ENCODE measurements at regions of chr19 and their contacts with region 1.

Region 1: DNA sequence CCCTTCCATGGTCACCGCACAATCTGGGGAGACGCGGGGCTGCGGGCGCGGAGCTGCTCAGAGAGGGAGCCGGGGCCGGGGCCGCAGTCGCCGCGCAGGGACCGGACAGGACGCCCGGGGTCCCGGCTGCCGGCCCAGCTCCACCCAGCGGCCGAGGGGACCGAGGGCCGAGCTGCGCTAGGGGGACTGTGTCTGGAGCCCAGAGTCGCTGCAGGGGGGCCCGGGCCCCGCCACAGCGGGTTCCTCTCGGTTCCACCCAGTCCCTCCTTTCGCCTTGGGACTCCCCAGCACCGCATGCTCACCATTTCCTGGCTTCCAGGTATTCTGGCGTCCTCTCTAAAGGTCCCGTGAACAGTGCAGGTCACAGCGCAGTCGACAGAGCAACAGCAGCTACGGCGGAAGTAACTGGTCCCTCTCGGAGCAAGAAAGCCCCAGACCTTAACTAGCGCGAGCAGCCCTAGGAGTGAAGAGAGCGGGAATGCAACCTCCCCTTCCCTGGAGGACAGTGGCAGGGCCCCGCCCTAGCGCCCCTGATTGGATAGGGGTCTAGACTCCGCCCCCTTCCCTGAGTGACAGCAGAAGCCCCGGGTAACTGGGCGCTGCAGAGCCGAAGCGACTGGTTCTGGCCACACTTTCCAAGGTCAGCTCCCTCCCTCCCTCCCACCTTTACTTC is at the start of gene ZNF878:
- DNase-seq: peak in 5 of 9 donors; percentile 24 to 40 (median 30)
- ATAC-seq: peak; percentile 87
- H3K4me3 ChIP-seq: peak within 1 kb of the TSS; percentile 61
- H3K4me3 Mint-ChIP-seq: peak within 1 kb of the TSS; percentile 81 to 92 (median 86)
- H3K27ac ChIP-seq: peak within 1 kb of the TSS; percentile 27
- H3K27ac Mint-ChIP-seq: peak within 1 kb of the TSS in 7 of 9 donors; percentile 9 to 61 (median 53)
- H3K4me1 ChIP-seq: peaks cover 5 to 10% of the 10 kb centered on the region in 2 donors
- H3K4me1 Mint-ChIP-seq: peaks cover 6 to 18% (median 13%) of the 10 kb centered on the region in 7 donors
- H3K27me3 ChIP-seq: no peaks in the 10 kb centered on the region
- H3K27me3 Mint-ChIP-seq: peaks cover 5 to 11% (median 9%) of the 10 kb centered on the region in 5 donors
- total RNA-seq, gene ZNF878: not detected

Region 2: GRCh38 chr19:12346896-12347295 is 294.3 kb after region 1 on chr19:
- CTCF ChIA-PET with region 1: no interaction called
- POLR2A ChIA-PET with region 1: no interaction called
- intact Hi-C with region 1: loop called in 1 of 2 experiments (anchors 10 kb)
- DNase-seq: peak in 5 of 9 donors; percentile 19 to 52 (median 32)
- ATAC-seq: peak; percentile 68
- H3K4me3 ChIP-seq: no peak overlapping the region
- H3K4me3 Mint-ChIP-seq: no peak overlapping the region
- H3K27ac ChIP-seq: no peak overlapping the region
- H3K27ac Mint-ChIP-seq: peak overlapping the region in 1 of 9 donors; percentile 36
- H3K4me1 ChIP-seq: no peaks in the 10 kb centered on the region
- H3K4me1 Mint-ChIP-seq: peaks cover 0 to 2% (median 0%) of the 10 kb centered on the region in 7 donors
- H3K27me3 ChIP-seq: no peaks in the 10 kb centered on the region
- H3K27me3 Mint-ChIP-seq: no peaks in the 10 kb centered on the region